ENCODE measurements at regions of chr3 and their contacts with region 1.

Region 1: GRCh38 chr3:47324278-47324865 is 41.6 kb downstream of the KLHL18 start:
- DNase-seq: peak; percentile 79
- H3K4me3 Mint-ChIP-seq: no peak overlapping the region
- H3K27ac Mint-ChIP-seq: no peak overlapping the region
- H3K4me1 Mint-ChIP-seq: peaks cover 9% of the 10 kb centered on the region
- H3K27me3 Mint-ChIP-seq: no peaks in the 10 kb centered on the region
- CTCF ChIP-seq: peak; percentile 68

Region 2: DNA sequence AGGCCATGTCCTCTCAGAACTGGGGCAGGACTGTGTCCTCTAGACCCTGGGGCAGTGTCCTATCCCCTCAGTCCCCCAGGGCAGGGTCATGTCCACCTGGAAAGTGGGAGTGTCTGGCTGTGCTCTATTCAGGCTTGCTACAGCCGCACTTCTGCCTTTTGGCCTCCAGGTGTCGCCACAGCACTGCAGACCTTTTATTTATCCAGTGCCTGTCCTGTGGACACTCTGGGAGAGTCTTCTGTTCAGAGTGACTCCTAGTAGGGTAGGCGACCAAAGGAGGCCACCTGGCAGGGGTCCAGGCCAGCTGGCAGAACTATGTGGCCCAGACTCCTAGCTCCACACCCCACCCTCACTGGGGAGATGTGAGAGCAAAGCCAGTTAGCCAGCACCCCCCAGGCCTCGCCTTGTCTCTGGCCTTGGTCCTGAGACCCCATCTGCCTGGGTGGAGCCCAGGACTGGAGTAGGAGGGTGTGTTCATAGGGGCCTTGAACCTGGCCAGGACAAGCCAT is 619.3 kb before region 1 on chr3:
- CTCF ChIA-PET with region 1: interaction called, 3 read pairs
- POLR2A ChIA-PET with region 1: no interaction called
- intact Hi-C with region 1: loop called (anchors 5 kb)
- DNase-seq: peak; percentile 75
- H3K4me3 Mint-ChIP-seq: no peak overlapping the region
- H3K27ac Mint-ChIP-seq: no peak overlapping the region
- H3K4me1 Mint-ChIP-seq: peaks cover 6% of the 10 kb centered on the region
- H3K27me3 Mint-ChIP-seq: no peaks in the 10 kb centered on the region
- CTCF ChIP-seq: peak; percentile 97

Region 3: GRCh38 chr3:46909535-46910442 is 414.6 kb before region 1 on chr3:
- CTCF ChIA-PET with region 1: interaction called, 3 read pairs
- POLR2A ChIA-PET with region 1: interaction called, 4 read pairs
- intact Hi-C with region 1: loop called (anchors 10 kb)
- DNase-seq: peak; percentile 81
- H3K4me3 Mint-ChIP-seq: no peak overlapping the region
- H3K27ac Mint-ChIP-seq: no peak overlapping the region
- H3K4me1 Mint-ChIP-seq: peaks cover 13% of the 10 kb centered on the region
- H3K27me3 Mint-ChIP-seq: no peaks in the 10 kb centered on the region
- CTCF ChIP-seq: peak; percentile 87

Region 4: GRCh38 chr3:47164007-47164881 is 160.1 kb before region 1 on chr3 and contains the start of gene SETD2:
- CTCF ChIA-PET with region 1: interaction called, 5 read pairs
- POLR2A ChIA-PET with region 1: interaction called, 3 read pairs
- intact Hi-C with region 1: loop called (anchors 1 kb)
- DNase-seq: peak; percentile 95
- H3K4me3 Mint-ChIP-seq: peak within 1 kb of the TSS; percentile 81
- H3K27ac Mint-ChIP-seq: peak within 1 kb of the TSS; percentile 87
- H3K4me1 Mint-ChIP-seq: peaks cover 27% of the 10 kb centered on the region
- H3K27me3 Mint-ChIP-seq: no peaks in the 10 kb centered on the region
- CTCF ChIP-seq: no peak
- total RNA-seq, gene SETD2: 35.8 and 38.0 TPM in 2 replicates

Region 5: DNA sequence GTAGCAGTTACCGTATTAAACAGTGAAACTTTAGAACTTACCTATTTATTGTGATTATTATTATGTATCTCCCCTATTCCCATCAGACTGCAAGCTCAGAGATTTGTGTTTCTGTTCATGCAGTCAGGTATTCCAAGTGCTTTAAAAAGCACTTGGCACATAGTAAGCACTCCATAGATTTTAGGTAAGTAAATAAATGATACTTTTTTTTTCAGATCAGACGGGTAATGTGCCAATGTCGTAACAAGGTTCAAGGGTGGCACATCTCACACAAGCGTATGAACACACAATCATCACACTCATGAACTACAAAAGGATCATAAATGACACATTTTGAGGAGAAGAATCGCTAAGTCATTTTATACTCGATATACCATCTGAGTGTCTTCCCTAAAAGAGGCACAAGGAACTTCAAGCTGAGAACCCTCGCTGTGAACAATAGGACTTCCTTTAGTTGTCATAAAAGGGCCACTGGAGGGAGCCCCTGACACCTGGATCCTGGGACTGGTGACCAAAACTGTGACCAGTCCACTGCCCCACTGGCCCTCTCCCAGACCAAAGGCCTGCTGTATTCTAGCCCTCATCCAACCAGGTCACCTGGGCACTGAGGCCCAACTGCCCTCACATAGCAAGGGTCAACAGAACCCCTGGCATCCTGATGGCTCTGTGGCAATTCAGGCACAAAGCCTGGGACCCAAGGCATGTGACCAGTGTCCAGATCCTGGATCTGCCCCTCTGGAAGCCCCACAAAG is 73.9 kb before region 1 on chr3:
- CTCF ChIA-PET with region 1: interaction called, 7 read pairs
- POLR2A ChIA-PET with region 1: no interaction called
- intact Hi-C with region 1: loop called (anchors 1 kb)
- DNase-seq: peak; percentile 61
- H3K4me3 Mint-ChIP-seq: no peak overlapping the region
- H3K27ac Mint-ChIP-seq: no peak overlapping the region
- H3K4me1 Mint-ChIP-seq: no peaks in the 10 kb centered on the region
- H3K27me3 Mint-ChIP-seq: no peaks in the 10 kb centered on the region
- CTCF ChIP-seq: peak; percentile 19

Measured in MCF 10A (cell line).